Gastrocnemius medialis (tissue), 4 donors: ENCODE measurements at regions of chr20 and their contacts with region 1.

Region 1: DNA sequence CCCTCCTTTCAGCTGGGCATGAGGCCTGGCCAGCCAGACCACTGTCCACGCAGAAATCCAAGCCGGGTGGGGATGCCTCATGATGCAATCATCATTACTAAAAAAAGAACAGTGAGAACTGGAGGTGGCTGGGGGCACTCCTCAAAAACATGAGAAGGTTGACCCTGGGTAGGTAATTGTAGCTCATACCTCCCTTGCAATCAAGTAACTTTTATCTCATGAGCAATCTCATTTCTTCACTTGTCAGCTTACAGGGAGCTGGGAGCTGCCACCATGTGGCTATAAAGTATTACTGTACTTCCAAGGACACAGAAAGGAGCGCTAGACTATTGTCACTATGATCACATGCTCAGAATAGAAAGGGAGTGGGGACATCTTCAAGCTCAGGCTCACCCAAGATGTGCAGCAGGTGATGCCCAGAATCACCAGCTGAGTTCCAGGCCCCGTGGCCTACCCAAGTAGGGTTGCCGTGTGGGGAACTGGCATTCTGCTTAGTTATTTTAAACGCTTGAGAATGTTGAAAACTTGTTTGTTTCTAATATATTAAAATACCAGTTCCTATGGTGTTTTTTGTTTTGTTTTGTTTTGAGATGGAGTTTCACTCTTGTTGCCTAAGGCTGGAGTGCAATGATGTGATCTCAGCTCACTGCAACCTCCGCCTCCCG is 3.0 kb upstream of the CDH26 start:
- DNase-seq: peak; percentile 28 to 58
- ATAC-seq: peak; percentile 98 to 99
- H3K4me3 ChIP-seq: no peak overlapping the region
- H3K27ac ChIP-seq: peak overlapping the region; percentile 49 to 76 (median 65)
- H3K4me1 ChIP-seq: peaks cover 6 to 10% of the 10 kb centered on the region in 2 donors
- H3K27me3 ChIP-seq: no peaks in the 10 kb centered on the region
- CTCF ChIP-seq: peak; percentile 43 to 58 (median 52)
- POLR2A ChIP-seq: no peak

Region 2: DNA sequence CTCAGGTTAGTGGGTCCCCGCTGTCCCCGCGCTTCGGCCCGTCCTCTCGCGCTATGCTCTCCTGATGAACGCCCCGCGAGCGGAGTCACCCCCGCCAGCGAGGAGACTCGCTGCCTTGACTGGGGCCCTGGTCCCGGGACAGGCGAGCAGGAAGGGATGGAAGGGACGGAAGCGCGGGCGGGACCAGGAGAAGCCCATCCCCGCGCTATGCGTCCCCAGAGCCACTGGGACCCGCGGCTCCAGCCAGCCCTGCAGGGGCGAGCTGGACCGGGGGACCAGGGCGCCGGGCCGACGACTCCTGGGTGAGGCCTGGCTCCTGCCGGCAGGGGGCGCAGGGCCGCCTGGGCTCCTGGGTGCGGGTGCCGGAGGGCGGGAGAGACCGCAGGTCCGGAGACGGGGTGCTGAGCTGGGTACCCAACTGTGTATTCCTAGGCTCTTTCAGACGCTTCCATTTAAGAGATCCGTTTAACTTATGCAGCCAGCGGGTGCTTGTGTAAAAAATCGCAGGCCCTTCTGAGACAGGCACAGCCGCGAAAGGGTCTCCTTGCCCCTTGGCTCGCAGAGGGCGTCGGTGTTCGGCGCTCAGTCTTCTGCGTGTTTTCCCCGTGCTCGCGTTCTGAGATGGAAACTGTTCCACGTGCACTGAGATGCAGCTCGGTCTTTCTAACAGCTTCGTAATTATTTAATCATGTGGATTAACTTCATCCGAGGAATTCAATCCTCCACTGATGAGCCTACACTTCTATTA is 21.2 kb before region 1 on chr20:
- in situ Hi-C with region 1: no loop called
- intact Hi-C with region 1: loop called (anchors 1 kb)
- DNase-seq: peak; percentile 60 to 76
- ATAC-seq: peak; percentile 60 to 71
- H3K4me3 ChIP-seq: peak overlapping the region; percentile 62 to 92 (median 86)
- H3K27ac ChIP-seq: peak overlapping the region; percentile 77 to 85 (median 84)
- H3K4me1 ChIP-seq: peaks cover 28 to 32% of the 10 kb centered on the region in 2 donors
- H3K27me3 ChIP-seq: no peaks in the 10 kb centered on the region
- CTCF ChIP-seq: peak; percentile 89 to 99 (median 96)
- POLR2A ChIP-seq: no peak